HEK293 (cell line): ENCODE measurements at regions of chr5 and their contacts with region 1.

Region 1: GRCh38 chr5:140977003-140977402 is 10.7 kb downstream of the PCDHAC2 start:
- H3K4me3 ChIP-seq: no peak overlapping the region
- H3K27ac ChIP-seq: no peak overlapping the region
- H3K4me1 ChIP-seq: no peaks in the 10 kb centered on the region
- CTCF ChIP-seq: no peak

Region 2: DNA sequence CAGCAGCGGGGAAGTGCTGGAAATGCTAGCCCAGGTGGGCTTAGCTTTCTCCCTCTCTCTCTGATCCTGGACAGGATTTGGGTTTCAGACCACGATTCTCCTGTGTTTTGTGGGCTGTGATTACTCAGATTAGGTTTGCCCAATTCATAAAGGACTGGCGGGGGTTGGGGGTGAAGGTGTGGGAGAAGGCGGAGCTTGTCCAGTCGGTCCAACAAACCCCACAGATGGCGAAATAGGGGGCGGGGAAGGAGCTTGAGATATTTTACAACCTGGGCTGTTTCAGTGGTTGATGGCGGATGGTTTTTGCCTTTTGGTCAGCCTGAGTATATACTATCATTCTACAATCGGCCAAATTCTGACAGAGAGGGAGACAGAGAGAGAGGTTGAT is 24.5 kb after region 1 on chr5:
- CTCF ChIA-PET with region 1: interaction called, 12 read pairs
- POLR2A ChIA-PET with region 1: no interaction called
- H3K4me3 ChIP-seq: peak overlapping the region; percentile 39
- H3K27ac ChIP-seq: peak overlapping the region; percentile 62; the same call in 1 of the 2 replicates
- H3K4me1 ChIP-seq: peaks cover 24% of the 10 kb centered on the region
- CTCF ChIP-seq: no peak

Region 3: DNA sequence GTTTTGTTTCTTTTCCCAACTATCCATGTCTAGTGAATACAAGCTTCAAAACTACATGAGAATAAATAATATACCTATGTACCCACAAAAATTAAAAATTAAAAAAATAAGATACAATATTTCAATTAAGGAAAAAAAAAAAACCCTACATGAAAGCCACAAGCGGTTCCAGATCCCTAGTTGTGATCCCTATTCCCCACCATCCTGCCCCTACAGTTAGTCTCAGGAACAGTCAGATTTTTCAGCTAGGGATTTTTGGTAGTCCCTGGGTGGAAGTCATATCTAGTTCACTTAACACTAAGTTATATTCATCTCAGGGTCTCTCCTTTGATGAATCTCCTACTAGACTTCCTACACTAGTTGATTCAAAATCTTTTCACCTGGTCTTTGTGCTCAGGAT is 55.6 kb after region 1 on chr5:
- CTCF ChIA-PET with region 1: no interaction called
- POLR2A ChIA-PET with region 1: no interaction called
- H3K4me3 ChIP-seq: no peak overlapping the region
- H3K27ac ChIP-seq: no peak overlapping the region
- H3K4me1 ChIP-seq: no peaks in the 10 kb centered on the region
- CTCF ChIP-seq: no peak